ENCODE measurements at regions of chr11 and their contacts with region 1.

Region 1: DNA sequence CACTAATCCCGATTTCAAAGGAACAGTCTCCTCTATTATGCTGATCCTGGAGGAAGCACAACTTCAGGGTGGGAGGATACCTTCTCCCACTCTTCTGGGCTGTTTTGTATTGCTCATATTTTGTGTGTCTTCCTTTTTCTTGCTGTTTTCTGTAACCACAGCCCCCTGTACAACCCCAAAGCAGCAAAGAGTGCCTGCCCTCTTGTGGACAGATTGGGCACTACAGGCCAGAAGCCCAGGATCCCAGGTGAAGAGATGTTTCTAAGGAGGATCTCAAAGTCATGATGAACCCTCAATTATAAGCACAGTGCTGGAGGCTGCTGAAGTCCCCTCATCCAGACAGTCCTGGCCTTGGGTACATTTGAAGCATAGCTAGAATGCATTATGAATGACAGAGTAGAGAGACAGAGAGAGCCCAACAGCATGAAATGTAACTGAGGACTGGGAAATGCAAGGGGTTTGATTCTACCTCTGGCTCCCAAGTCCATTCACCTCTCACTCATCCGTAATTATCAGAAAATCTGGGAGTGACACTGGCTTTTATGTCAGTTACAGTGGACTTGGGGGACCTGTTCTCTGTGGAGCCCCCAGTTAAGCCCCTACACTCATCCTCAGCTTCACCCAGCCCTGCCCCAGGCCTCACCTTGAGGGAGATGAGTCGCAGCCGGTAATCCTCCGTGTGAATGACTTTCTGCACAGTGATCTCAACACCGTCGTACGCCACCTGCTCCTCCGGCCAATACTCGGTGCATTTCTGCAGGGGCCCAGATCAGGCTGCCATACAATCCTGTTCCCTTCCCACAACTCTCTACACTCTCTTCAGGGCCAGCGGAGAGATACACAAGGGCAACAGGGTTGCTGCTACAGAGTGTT is 6.2 kb upstream of the IGSF22 start:
- DNase-seq: no peak
- H3K4me3 ChIP-seq: no peak overlapping the region
- H3K27ac ChIP-seq: no peak overlapping the region
- H3K4me1 ChIP-seq: no peaks in the 10 kb centered on the region
- H3K27me3 ChIP-seq: no peaks in the 10 kb centered on the region
- CTCF ChIP-seq: peak; percentile 79 to 90 (median 84)
- POLR2A ChIP-seq: no peak

Region 2: GRCh38 chr11:18115360-18116127 is 616.6 kb before region 1 on chr11:
- intact Hi-C with region 1: loop called (anchors 10 kb)
- DNase-seq: no peak
- H3K4me3 ChIP-seq: no peak overlapping the region
- H3K27ac ChIP-seq: no peak overlapping the region
- H3K4me1 ChIP-seq: no peaks in the 10 kb centered on the region
- H3K27me3 ChIP-seq: no peaks in the 10 kb centered on the region
- CTCF ChIP-seq: peak in 2 of 3 experiments; percentile 62 to 67
- POLR2A ChIP-seq: no peak

Region 3: DNA sequence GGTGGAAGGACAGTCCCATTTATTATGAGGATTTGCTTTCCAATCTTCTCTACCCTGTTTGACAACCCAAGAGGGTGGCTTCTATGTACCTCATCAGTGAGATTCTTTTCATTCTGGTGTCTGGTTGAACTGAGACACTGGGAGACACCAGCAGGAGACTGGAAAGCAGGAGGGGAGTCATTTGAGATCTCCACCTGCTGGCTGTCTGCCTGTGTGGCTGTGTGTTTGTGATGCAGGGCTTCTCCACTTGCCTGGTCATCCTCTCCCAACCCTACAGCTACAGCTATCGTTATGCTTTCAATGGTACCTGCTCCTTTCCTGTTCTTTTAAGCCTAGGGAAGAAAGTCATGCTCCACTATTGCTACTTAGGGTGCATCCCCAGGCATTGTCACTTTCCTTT is 158.4 kb after region 1 on chr11:
- intact Hi-C with region 1: no loop called
- DNase-seq: no peak
- H3K4me3 ChIP-seq: no peak overlapping the region
- H3K27ac ChIP-seq: no peak overlapping the region
- H3K4me1 ChIP-seq: no peaks in the 10 kb centered on the region
- H3K27me3 ChIP-seq: no peaks in the 10 kb centered on the region
- CTCF ChIP-seq: no peak
- POLR2A ChIP-seq: no peak